ENCODE measurements at regions of chr2 and their contacts with region 1.

Region 1: DNA sequence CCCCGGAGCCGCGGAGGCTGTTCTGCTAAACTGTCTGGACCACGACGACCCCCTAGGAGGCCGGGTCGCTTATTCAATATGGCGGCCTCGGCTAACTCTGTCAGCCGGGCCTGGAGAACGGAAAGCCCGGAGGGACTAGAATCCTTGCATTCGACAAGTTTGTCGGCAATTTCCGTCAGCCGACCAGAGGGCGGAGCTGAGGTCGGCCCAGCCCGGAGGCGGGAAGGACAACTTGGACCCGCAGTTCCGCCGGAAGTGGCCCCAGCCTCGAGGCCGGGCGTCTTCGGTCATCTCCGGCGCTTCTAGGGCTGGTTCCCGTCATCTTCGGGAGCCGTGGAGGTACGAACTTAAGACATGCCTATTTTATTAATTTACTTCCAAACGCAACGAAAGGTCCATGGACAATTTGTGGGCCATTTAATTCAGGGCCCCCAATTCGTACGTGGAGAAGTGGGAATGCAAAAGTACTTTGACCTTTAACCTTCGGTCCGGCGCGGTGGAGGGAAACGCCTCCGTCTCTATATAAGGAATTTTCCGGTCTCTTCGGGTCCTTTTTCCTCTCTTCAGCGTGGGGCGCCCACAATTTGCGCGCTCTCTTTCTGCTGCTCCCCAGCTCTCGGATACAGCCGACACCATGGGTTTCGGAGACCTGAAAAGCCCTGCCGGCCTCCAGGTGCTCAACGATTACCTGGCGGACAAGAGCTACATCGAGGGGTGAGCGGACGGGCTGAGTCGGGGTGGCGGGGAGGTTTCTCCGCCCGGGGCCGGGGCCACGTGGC is at the starts of genes EEF1B2 and NDUFS1:
- DNase-seq: peak; percentile 97
- H3K4me3 ChIP-seq: peak within 1 kb of the TSS; percentile 87
- H3K27ac ChIP-seq: peak within 1 kb of the TSS; percentile 90
- H3K4me1 ChIP-seq: no peaks in the 10 kb centered on the region
- H3K27me3 ChIP-seq: no peaks in the 10 kb centered on the region
- CTCF ChIP-seq: no peak
- total RNA-seq, gene EEF1B2: 467 to 557 TPM
- total RNA-seq, gene NDUFS1: 143 to 200 TPM

Region 2: GRCh38 chr2:206085742-206086445 is 73.6 kb before region 1 on chr2 and contains the start of gene INO80D:
- intact Hi-C with region 1: loop called (anchors 5 kb)
- DNase-seq: peak; percentile 81
- H3K4me3 ChIP-seq: peak within 1 kb of the TSS; percentile 88
- H3K27ac ChIP-seq: peak within 1 kb of the TSS; percentile 98
- H3K4me1 ChIP-seq: peaks cover 4% of the 10 kb centered on the region
- H3K27me3 ChIP-seq: no peaks in the 10 kb centered on the region
- CTCF ChIP-seq: peak; percentile 44
- total RNA-seq, gene INO80D: 20.2 to 29.9 TPM

Region 3: GRCh38 chr2:206274434-206275268 is 115.1 kb after region 1 on chr2 and contains the start of gene ZDBF2:
- intact Hi-C with region 1: loop called (anchors 10 kb)
- DNase-seq: peak; percentile 45
- H3K4me3 ChIP-seq: peak within 1 kb of the TSS; percentile 52
- H3K27ac ChIP-seq: no peak within 1 kb of the TSS
- H3K4me1 ChIP-seq: no peaks in the 10 kb centered on the region
- H3K27me3 ChIP-seq: peaks cover 21% of the 10 kb centered on the region
- CTCF ChIP-seq: no peak
- total RNA-seq, gene ZDBF2: 1.7 to 5.8 TPM

Region 4: DNA sequence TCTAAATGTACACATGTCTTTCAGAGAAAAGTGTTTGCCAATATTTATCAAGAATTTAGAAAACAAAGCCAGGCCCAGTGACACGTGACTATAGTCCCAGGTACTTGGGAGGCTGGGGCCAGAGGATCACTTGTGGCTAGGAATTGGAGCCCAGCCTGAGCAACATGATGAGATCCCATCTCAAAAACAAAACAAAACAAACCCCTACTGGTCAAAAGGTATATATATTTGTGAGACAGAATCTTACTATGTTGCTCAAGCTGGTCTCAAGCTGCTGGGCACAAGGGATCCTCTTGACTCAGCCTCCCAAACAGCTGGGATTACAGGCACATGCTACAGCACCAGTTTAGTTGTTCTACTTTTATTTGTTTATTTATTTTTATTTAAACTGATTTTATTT is 194.2 kb after region 1 on chr2:
- intact Hi-C with region 1: no loop called
- DNase-seq: no peak
- H3K4me3 ChIP-seq: no peak overlapping the region
- H3K27ac ChIP-seq: no peak overlapping the region
- H3K4me1 ChIP-seq: no peaks in the 10 kb centered on the region
- H3K27me3 ChIP-seq: no peaks in the 10 kb centered on the region
- CTCF ChIP-seq: no peak